Panc1 (cell line): ENCODE measurements at regions of chr7 and their contacts with region 1.

Region 1: DNA sequence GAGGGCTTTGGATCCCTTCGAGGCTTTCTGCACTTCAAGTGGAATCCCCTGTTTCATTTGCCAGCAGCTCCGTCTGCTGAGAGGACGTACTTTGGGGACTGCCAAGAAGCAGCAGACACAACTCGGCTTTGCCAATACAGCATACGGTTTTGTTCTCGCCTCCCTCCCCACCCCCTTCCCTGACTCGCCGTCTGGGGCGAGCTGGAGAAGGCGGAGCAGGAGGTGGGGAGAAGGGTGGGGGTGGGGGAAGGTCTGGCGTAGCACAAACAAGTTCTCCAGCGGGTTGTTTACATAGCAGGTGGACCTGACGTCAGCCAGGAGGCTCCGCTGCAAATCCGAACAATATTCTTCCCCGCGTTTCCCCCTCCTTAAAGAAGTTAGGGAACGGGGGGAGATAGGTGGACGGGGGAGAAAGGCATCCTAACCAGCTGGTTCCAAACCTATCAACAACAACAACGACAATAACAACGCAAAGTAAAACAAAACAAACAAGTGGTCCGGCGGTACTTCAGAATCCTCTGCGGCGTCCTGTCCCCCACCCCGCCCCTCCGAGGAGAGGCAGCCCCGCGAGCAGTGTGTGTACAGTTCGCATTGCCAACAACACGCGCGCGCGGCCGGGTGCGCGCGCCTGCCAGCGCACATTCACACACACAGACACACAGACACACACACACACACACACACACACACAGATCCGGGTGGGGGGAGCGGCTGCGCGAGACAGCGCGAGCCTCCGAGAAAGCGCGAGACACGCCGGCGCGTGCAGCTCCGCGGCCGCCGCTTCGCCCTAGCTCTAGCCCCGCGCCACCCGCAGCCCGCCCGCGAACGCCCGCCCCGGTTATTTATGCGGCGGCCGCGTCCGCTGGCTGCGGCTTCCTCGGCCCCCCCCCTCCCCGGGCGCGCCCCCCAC is 167.0 kb upstream of the PPP1R3A start:
- DNase-seq: no peak
- ATAC-seq: peak; percentile 62
- H3K4me3 ChIP-seq: peak overlapping the region; percentile 46 to 70
- H3K27ac ChIP-seq: no peak overlapping the region
- H3K4me1 ChIP-seq: peaks cover 10% of the 10 kb centered on the region; the same call in 1 of the 2 replicates
- H3K27me3 ChIP-seq: peaks cover 16% of the 10 kb centered on the region
- CTCF ChIP-seq: no peak

Region 2: GRCh38 chr7:114209968-114210367 is 124.1 kb after region 1 on chr7:
- CTCF ChIA-PET with region 1: no interaction called
- POLR2A ChIA-PET with region 1: interaction called, 11 read pairs
- in situ Hi-C with region 1: no loop called
- intact Hi-C with region 1: no loop called
- DNase-seq: no peak
- ATAC-seq: no peak
- H3K4me3 ChIP-seq: no peak overlapping the region
- H3K27ac ChIP-seq: no peak overlapping the region
- H3K4me1 ChIP-seq: no peaks in the 10 kb centered on the region
- H3K27me3 ChIP-seq: no peaks in the 10 kb centered on the region
- CTCF ChIP-seq: no peak

Region 3: GRCh38 chr7:114539575-114539974 is 453.7 kb after region 1 on chr7:
- CTCF ChIA-PET with region 1: no interaction called
- POLR2A ChIA-PET with region 1: no interaction called
- in situ Hi-C with region 1: no loop called
- intact Hi-C with region 1: loop called (anchors 5 kb)
- DNase-seq: no peak
- ATAC-seq: no peak
- H3K4me3 ChIP-seq: no peak overlapping the region
- H3K27ac ChIP-seq: no peak overlapping the region
- H3K4me1 ChIP-seq: no peaks in the 10 kb centered on the region
- H3K27me3 ChIP-seq: no peaks in the 10 kb centered on the region
- CTCF ChIP-seq: peak; percentile 37; the same call in 1 of the 2 replicates

Region 4: GRCh38 chr7:115679976-115680375 is 1594.1 kb after region 1 on chr7:
- CTCF ChIA-PET with region 1: no interaction called
- POLR2A ChIA-PET with region 1: no interaction called
- in situ Hi-C with region 1: no loop called
- intact Hi-C with region 1: loop called (anchors 5 kb)
- DNase-seq: peak; percentile 22
- ATAC-seq: no peak
- H3K4me3 ChIP-seq: no peak overlapping the region
- H3K27ac ChIP-seq: no peak overlapping the region
- H3K4me1 ChIP-seq: peaks cover 3% of the 10 kb centered on the region; the same call in 1 of the 2 replicates
- H3K27me3 ChIP-seq: no peaks in the 10 kb centered on the region
- CTCF ChIP-seq: peak; percentile 63

Region 5: DNA sequence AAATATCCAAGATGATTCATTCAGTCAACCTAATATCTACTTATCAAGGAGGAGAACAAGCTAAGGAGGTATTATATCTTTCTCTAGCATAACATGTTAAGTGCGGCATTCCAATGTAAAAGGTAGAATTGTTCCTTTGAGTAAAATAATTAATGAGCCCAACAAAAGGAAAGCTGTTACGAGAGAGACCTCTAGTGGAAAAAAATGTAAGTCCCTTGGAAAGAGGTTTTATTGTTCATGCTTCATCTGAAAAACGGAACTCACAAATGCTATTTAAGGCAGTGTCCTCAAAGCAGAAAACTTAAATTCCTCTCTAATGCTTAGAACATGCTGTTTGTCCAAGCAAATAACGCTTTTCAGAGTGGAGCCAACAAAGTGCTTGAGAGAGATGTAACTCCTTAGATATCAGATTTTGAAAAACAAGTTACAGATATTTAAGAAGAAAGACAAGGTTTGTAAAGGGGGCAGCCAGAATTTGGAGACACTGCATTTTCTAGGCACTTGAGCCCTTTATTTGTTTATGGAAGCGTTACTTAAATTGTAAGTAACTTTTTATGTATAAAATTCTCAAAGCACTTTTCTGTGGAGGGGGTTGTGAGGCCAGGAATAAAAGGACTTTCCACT is 1824.8 kb after region 1 on chr7:
- CTCF ChIA-PET with region 1: interaction called, 3 read pairs
- POLR2A ChIA-PET with region 1: no interaction called
- in situ Hi-C with region 1: no loop called
- intact Hi-C with region 1: loop called (anchors 5 kb)
- DNase-seq: peak; percentile 13
- ATAC-seq: no peak
- H3K4me3 ChIP-seq: no peak overlapping the region
- H3K27ac ChIP-seq: no peak overlapping the region
- H3K4me1 ChIP-seq: no peaks in the 10 kb centered on the region; the same call in 1 of the 2 replicates
- H3K27me3 ChIP-seq: peaks cover 3% of the 10 kb centered on the region; the same call in 1 of the 2 replicates
- CTCF ChIP-seq: peak; percentile 70; the same call in 1 of the 2 replicates